Heart left ventricle (tissue), 16 donors: ENCODE measurements at regions of chr1 and their contacts with region 1.

Region 1: DNA sequence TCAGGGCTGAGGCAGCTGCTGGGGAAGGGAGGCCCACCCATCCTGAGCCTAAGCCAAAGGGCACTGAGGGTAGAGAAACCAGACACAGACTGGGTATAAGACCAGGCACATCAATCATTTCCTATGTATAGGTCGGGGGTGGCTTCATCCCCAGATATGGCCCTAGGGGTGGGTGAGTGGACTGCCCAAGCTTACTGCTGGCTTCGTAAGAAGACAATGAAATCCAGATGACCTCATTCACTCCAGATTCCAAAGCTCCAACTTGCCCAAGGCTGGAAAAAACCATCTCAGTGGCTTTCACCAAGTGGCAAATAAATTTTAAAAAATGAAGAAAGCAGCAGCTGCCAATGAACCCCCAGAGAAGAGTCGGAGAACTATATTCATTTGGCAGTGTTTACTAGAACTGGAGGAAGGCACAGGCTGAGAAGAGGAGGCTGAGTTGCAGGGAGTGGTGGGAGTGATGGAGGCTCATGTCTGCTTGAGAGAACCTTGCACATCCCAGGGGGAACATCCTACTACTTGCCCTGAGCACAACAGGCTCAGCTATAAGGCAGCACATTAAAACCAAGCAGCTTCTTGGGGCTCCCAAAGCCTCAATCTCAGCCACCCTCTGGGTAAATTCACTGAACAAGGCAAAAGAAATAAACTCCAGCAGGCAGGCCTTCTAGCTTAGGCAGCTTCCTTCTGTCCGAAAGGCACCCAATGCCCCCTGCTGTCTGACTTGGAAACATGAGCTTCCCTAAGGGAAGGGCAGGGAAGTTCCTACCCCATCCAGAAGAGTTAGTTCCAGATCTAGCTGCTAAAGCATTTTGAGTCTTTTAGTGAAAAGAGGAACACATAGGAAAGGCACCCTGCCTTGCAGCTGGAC is 14.1 kb downstream of the PEA15 start:
- DNase-seq: peak in 4 of 5 donors; percentile 55 to 67 (median 64)
- ATAC-seq: peak; percentile 52 to 87 (median 82)
- H3K4me3 ChIP-seq: no peak overlapping the region
- H3K27ac ChIP-seq: peak overlapping the region; percentile 17 to 80 (median 56)
- H3K4me1 ChIP-seq: peaks cover 3 to 51% (median 32%) of the 10 kb centered on the region in 12 donors
- H3K27me3 ChIP-seq: no peaks in the 10 kb centered on the region
- CTCF ChIP-seq: peak; percentile 49 to 78 (median 69)
- POLR2A ChIP-seq: no peak

Region 2: DNA sequence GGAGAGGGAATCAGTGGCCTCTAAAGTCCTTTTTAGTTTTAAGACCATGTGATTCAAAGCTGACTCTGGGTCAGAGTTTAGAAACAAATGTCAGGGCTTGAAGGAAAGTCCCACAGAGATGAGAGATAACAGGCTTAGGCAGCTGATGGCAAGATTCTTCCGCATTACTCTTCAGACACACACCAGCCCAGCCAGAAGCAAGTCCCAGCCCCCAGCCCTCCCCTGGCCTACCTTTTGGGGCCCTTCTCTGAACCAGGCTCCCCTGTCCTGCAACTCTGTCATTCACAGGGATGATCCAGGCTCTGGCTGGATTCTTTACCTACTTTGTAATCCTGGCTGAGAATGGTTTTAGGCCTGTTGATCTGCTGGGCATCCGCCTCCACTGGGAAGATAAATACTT is 42.1 kb before region 1 on chr1:
- intact Hi-C with region 1: no loop called
- DNase-seq: no peak
- ATAC-seq: no peak
- H3K4me3 ChIP-seq: no peak overlapping the region
- H3K27ac ChIP-seq: no peak overlapping the region
- H3K4me1 ChIP-seq: no peaks in the 10 kb centered on the region
- H3K27me3 ChIP-seq: peaks cover 0 to 2% (median 0%) of the 10 kb centered on the region in 9 donors
- CTCF ChIP-seq: no peak
- POLR2A ChIP-seq: no peak

Region 3: DNA sequence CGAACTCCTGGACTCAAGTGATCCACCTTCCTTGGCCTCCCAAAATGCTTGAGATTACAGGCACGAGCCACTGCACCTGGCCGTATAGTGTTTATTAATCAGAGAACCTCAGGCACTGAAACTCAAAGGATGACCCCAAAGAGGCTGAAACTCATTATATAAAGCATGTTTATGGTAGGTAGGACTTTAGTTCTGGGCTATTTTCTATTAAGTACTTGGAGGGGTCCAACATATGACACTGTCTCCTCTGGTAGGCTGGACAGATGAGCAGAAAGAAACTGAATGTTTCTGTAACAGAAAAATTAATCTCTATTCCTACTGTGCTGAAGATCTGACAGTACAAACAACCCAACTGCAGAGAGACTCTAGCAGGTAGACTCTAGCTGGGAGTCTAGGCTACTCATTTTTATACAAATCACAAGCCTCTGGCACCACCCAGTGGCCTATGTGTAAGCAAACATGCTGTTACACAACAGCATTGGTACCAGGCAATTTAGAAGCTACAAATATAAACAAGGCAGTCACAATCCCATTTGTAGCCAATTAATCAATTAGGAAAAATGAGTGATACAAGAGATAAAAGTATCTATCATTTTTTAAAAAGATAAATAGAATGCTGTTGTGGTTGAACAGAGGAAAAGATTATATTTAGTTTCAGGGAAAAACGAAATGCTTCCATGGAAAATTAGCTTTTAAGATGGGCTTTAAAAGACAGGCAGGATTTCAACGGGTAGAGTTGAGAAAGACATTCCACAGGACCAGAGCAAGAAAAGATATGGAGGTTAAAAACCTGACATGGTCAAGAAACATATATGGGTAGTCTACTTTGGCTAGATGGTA is 32.6 kb after region 1 on chr1:
- intact Hi-C with region 1: loop called in 2 of 10 experiments (anchors 5 kb)
- DNase-seq: peak in 4 of 5 donors; percentile 58 to 72 (median 64)
- ATAC-seq: peak; percentile 90 to 95 (median 94)
- H3K4me3 ChIP-seq: no peak overlapping the region
- H3K27ac ChIP-seq: peak overlapping the region in 8 of 12 donors; percentile 15 to 59 (median 41)
- H3K4me1 ChIP-seq: peaks cover 0 to 50% (median 27%) of the 10 kb centered on the region in 12 donors
- H3K27me3 ChIP-seq: no peaks in the 10 kb centered on the region
- CTCF ChIP-seq: peak; percentile 48 to 82 (median 68)
- POLR2A ChIP-seq: no peak

Region 4: DNA sequence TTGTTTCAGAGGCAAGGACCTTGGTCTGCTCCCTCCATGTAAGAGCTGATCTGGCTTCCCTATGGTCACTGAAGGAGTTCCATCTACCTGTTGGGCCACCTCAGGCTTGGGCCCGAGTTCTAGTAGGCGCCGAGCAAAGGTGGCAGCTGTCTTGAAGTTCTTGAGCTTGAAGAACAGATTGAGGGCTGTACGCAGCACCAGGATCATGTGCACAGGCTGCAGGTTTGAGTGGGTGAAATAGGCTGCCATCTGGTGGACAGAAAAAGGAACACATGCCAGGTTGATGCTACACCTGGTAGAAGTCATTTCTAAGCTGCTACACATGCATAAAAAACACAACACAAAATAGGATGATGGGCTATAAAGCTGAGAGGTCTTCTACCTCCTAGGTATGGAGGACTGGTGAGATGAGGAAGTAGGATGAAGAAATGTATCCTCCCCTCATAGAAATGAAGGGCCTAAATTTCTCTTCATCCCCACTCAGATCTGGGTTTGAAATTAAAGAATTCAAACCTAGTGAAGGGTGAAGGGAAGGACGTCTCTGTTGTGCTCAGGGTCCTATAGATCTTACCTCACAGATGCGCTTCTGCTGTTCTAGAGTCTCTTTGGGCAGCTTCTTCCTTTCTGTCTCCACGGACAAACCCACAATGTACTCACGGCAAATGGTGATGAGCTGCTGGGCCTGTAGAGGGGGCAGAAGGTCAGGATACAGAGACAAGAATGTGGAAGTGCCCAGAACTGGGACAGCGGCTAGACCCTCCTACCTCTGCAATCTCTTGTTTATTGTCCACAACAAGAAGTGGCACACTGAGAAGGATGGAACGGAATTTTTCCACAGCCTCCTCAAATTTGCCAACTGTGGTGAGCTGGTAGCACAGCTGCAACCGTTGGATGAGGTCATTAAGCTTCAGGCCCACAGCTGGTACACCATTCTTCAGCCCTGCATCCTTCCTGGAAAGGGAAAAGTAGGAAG is 72.2 kb after region 1 on chr1:
- intact Hi-C with region 1: loop called in 1 of 10 experiments (anchors 5 kb)
- DNase-seq: peak in 4 of 5 donors; percentile 44 to 60 (median 53)
- ATAC-seq: peak; percentile 73 to 90 (median 82)
- H3K4me3 ChIP-seq: no peak overlapping the region
- H3K27ac ChIP-seq: peak overlapping the region in 1 of 12 donors; percentile 32
- H3K4me1 ChIP-seq: peaks cover 0 to 5% (median 0%) of the 10 kb centered on the region in 12 donors
- H3K27me3 ChIP-seq: no peaks in the 10 kb centered on the region
- CTCF ChIP-seq: peak; percentile 62 to 86 (median 78)
- POLR2A ChIP-seq: no peak